Activated B cell treated with CpG ODN at 0.5 μM for 24 hours (primary cell): ENCODE measurements at regions of chr5 and their contacts with region 1.

Region 1: DNA sequence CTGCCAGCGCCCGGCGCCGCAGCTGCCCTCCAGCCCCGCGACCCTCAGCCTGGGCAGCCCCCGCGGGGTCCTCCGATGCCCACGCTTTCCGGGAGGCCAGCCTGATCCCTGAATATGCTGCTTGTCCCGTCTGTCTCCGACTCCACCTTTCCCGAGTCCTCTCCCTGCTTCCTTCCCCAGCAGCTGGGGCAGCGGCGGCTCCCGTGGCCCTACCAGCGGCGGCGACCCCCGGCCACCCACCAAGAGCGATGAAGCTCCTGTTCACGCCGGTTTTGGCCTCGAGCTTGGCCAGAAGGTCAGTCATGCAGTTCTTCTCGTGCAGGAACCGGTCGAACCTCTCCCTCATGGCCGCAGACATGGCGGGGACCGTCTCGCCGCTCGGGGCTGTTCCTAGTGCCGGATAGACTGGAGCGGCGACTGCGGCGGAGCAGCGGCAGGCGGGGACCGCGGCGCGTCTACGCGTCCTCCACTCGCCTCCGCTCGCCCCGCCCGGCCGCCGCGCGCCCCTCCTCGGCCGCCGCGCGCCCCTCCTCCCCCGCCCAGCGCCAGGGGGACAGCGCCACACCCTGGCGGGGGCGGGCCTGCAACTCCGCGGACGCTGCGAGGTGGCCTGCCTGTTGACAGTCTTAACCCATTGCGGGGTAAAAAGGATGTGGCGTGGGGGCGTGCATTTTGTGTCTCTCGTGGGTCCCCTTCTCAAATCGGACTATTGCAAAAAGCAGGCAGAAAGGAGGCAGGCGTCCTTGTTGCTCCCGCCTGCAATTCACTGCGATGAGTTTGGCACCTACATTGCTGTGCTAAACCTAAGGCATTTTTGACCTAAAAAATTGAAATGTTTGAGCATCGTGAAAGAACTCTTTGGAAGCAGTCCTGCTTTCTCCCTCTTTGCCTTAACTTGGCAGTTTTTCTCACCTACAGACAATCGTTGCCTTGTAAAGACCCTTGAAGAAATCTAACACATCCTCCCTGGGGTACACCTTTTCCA is at the start of gene REEP5:
- DNase-seq: peak; percentile 85
- ATAC-seq: peak; percentile 77
- H3K4me3 Mint-ChIP-seq: peak within 1 kb of the TSS; percentile 96
- H3K27ac Mint-ChIP-seq: peak within 1 kb of the TSS; percentile 94
- H3K4me1 Mint-ChIP-seq: peaks cover 80% of the 10 kb centered on the region
- H3K27me3 Mint-ChIP-seq: no peaks in the 10 kb centered on the region
- CTCF ChIP-seq: no peak
- total RNA-seq, gene REEP5: 44.5 and 46.8 TPM in 2 replicates

Region 2: DNA sequence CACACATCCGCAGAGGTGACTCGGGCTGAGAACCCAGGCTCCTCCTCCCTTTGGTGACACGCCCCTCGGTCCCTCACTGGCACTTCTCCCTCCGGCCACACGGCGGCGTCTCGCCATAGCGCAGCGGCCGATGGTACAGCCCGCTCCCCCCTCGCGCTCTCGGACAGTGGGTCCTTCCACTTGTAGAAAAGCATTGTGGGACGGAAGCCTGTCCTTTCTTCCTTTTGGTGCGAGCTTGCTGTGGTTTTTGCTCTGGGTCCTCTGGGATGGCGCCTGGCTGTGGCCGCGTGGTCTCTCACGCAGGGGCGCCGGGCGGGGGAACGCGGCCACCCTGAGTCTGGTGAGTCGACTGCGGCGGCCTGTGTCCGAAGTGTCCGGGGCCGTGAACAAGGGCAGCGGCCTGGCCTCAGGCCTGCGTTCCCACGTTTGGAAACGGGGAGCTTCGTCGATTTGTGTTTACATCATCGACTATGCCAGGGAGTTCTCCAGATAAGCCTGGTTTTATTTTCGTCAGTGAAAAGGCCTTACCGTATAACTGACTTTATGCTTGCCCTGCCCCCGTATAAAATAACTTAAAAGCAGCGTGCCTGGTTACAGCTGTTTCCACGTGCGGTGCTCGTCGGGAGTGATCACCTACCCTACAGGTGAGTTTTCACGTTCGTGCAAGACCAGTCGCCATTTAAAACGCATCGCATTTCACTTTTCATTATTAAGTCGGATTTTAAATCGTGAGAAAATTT is 761.3 kb before region 1 on chr5:
- CTCF ChIA-PET with region 1: no interaction called
- POLR2A ChIA-PET with region 1: no interaction called
- intact Hi-C with region 1: loop called (anchors 2 kb)
- DNase-seq: peak; percentile 93
- ATAC-seq: peak; percentile 99
- H3K4me3 Mint-ChIP-seq: peak overlapping the region; percentile 97
- H3K27ac Mint-ChIP-seq: peak overlapping the region; percentile 82
- H3K4me1 Mint-ChIP-seq: peaks cover 25% of the 10 kb centered on the region
- H3K27me3 Mint-ChIP-seq: no peaks in the 10 kb centered on the region
- CTCF ChIP-seq: peak; percentile 89

Region 3: DNA sequence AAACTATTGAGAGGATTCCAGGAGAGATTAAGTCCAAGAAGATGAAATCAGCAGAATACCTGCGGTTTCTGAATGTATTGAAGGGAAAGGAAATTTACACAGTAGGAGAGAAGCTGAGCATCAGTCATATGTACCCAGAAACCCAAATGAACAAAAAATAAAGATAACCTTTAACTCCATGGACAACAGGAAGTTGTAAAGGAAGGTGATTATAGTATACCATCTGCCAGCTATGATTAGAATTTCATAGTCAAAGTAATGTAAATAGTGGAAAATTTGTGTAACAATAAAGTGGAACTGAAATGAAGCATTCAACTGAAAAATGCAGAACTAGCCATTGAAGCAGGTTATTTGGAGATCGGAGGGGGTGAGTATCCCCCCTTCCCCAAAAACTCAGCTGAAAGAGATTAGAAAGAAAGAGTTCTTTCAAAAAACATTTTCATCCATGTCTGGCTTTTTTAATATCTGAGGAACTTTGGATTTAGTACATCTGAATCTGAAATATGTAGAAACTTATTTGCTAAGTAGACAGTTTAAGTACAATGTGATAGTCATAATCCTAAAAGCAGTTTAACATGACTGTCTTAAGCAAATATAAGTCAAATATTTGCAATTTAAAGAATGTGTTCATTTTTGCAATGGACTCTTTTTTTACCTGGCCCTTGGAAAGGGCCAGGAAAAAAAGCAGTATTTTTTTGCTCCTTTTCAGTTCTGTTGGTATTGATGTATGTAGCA is 126.0 kb before region 1 on chr5:
- CTCF ChIA-PET with region 1: no interaction called
- POLR2A ChIA-PET with region 1: no interaction called
- intact Hi-C with region 1: loop called (anchors 2 kb)
- DNase-seq: no peak
- ATAC-seq: peak; percentile 83
- H3K4me3 Mint-ChIP-seq: peak overlapping the region; percentile 39
- H3K27ac Mint-ChIP-seq: peak overlapping the region; percentile 76
- H3K4me1 Mint-ChIP-seq: peaks cover 44% of the 10 kb centered on the region
- H3K27me3 Mint-ChIP-seq: no peaks in the 10 kb centered on the region
- CTCF ChIP-seq: no peak

Region 4: GRCh38 chr5:112860929-112861637 is 61.0 kb before region 1 on chr5 and contains the start of gene SRP19:
- CTCF ChIA-PET with region 1: interaction called, 4 read pairs
- POLR2A ChIA-PET with region 1: interaction called, 36 read pairs
- intact Hi-C with region 1: loop called (anchors 1 kb)
- DNase-seq: peak; percentile 83
- ATAC-seq: peak; percentile 94
- H3K4me3 Mint-ChIP-seq: peak within 1 kb of the TSS; percentile 96
- H3K27ac Mint-ChIP-seq: peak within 1 kb of the TSS; percentile 96
- H3K4me1 Mint-ChIP-seq: peaks cover 34% of the 10 kb centered on the region
- H3K27me3 Mint-ChIP-seq: peaks cover 4% of the 10 kb centered on the region
- CTCF ChIP-seq: no peak
- total RNA-seq, gene SRP19: 50.4 and 51.6 TPM in 2 replicates

Region 5: DNA sequence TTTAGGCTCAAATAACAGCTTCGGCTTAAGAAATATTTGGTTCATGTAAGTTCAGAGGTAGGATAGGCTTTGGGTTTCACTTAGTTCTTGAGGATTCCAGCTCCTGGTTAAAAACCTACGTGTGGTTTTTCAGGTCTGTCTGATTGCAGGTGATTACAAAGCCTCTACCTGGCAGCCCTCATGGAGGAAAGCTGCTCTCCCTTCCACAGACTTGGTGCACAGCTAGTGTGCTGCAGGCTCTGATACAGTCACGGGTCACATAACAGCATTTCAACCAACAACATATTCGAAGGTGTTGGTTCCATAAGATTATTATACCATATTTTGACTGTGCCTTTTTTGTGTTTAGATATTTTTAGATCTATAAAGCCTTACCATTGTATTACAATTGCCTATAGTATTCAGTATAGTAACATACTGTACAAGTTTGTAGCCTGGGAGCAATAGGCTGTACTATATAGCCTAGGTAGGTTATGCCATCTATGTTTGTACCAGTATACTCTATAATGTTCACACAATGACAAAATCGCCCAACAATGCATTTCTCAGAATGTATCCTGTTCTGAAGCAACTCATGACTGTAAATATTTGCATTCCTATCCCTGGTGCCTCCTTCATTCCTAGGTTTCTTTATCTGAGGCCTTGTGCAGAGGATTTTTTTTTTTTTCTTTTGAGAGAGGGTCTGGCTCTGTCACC is 46.4 kb after region 1 on chr5:
- CTCF ChIA-PET with region 1: interaction called, 16 read pairs
- POLR2A ChIA-PET with region 1: interaction called, 6 read pairs
- intact Hi-C with region 1: loop called (anchors 1 kb)
- DNase-seq: no peak
- ATAC-seq: no peak
- H3K4me3 Mint-ChIP-seq: no peak overlapping the region
- H3K27ac Mint-ChIP-seq: no peak overlapping the region
- H3K4me1 Mint-ChIP-seq: peaks cover 16% of the 10 kb centered on the region
- H3K27me3 Mint-ChIP-seq: no peaks in the 10 kb centered on the region
- CTCF ChIP-seq: no peak

Region 6: DNA sequence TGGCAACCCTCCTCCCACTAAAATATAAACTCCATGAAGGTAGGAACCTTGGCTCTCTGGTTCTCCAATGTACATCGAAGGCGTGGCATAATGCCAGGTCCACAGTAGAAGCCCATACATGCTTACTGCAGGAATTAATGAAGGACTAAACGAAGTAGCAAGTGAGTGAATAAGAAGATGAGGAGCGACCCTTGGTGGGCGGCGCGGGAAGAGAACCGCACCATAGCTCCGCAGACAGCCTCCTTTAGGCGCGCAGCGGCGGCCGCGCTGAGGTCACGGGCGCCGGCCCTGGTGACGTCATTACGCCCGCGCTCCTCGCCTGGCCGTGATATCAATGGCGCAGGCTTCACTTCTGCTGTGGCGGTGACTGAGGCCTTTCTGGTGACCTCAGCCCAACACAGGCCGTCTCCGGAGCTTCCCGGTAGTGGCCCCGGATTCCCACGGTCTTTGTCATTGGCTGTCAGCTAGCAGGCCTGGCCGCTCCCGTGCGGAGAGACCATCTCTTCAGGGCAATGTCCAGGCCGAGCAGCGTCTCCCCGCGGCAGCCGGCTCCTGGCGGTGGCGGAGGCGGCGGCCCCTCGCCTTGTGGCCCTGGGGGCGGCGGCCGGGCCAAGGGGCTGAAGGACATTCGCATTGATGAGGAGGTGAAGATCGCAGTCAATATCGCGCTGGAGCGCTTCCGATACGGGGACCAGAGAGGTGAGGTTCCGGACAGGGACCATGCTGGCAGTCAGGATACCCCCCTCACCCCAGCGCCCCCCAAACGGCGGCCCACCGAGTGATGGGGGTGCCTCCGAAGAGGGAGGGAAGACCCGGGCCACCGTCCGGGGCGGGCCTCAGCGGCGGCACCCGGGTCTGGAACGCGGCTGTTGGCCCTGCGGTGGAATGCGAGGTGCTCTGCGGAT is 591.5 kb after region 1 on chr5 and contains the start of gene YTHDC2:
- CTCF ChIA-PET with region 1: no interaction called
- POLR2A ChIA-PET with region 1: no interaction called
- intact Hi-C with region 1: loop called (anchors 2 kb)
- DNase-seq: peak; percentile 86
- ATAC-seq: peak; percentile 98
- H3K4me3 Mint-ChIP-seq: peak within 1 kb of the TSS; percentile 92
- H3K27ac Mint-ChIP-seq: peak within 1 kb of the TSS; percentile 87
- H3K4me1 Mint-ChIP-seq: peaks cover 28% of the 10 kb centered on the region
- H3K27me3 Mint-ChIP-seq: peaks cover 12% of the 10 kb centered on the region
- CTCF ChIP-seq: no peak
- total RNA-seq, gene YTHDC2: 41.7 and 44.8 TPM in 2 replicates